BJ (cell line): ENCODE measurements at regions of chr4 and their contacts with region 1.

Region 1: GRCh38 chr4:55358668-55359067 is 12.6 kb downstream of the SRD5A3 start:
- DNase-seq: peak; percentile 87
- H3K4me3 ChIP-seq: no peak overlapping the region
- H3K27me3 ChIP-seq: no peaks in the 10 kb centered on the region
- CTCF ChIP-seq: no peak

Region 2: DNA sequence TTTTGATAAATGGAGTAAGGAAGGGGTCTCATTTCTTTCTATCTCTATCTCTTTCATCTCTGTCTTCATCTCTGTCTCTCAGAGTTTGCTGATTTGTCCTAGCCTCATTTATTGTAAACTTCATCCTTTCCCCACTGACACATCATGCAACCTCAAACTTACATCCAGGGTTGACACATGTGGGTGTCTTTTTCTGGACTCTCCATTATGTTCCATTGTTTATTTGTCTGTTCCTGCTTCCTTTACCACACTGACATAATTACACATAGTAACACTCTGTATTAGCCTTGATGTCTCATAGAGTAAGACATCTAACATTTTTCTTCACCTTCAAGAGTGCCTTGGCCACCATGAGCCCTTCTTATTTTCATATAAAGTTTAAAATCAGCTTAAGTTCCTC is 20.7 kb before region 1 on chr4:
- CTCF ChIA-PET with region 1: no interaction called
- POLR2A ChIA-PET with region 1: no interaction called
- DNase-seq: no peak
- H3K4me3 ChIP-seq: no peak overlapping the region
- H3K27me3 ChIP-seq: 0 out of 2 replicates have a peak, but pooled peaks cover 2% of the 10 kb centered on the region
- CTCF ChIP-seq: no peak

Region 3: GRCh38 chr4:55386073-55386472 is 27.4 kb after region 1 on chr4:
- CTCF ChIA-PET with region 1: no interaction called
- POLR2A ChIA-PET with region 1: interaction called, 13 read pairs
- DNase-seq: no peak
- H3K4me3 ChIP-seq: no peak overlapping the region
- H3K27me3 ChIP-seq: no peaks in the 10 kb centered on the region
- CTCF ChIP-seq: no peak